ENCODE measurements at regions of chr7 and their contacts with region 1.

Region 1: DNA sequence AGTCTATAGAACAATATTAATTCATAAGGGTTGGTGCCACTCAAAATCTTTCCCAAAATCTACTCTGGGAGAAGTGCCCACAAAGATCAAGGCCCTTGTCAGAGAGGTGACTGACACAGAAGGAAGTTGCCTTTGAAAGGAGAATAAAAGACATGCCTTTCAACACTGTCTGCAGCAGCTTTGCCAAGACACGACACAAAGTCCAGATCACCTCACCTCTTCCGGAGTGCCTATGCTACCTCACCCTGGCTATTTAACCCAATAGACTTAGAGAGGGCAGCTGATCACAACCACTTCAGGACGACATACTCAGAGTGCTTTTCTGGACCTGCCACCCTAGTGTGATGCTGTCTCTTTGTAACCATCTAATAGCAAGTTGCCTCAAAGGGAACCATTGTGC is 49.0 kb upstream of the YAE1 start:
- DNase-seq: no peak
- H3K4me3 ChIP-seq: no peak overlapping the region
- H3K27ac ChIP-seq: no peak overlapping the region
- H3K4me1 ChIP-seq: no peaks in the 10 kb centered on the region
- H3K27me3 ChIP-seq: peaks cover 2% of the 10 kb centered on the region
- CTCF ChIP-seq: no peak

Region 2: GRCh38 chr7:38398725-38399321 is 1118.4 kb before region 1 on chr7:
- CTCF ChIA-PET with region 1: no interaction called
- dilution Hi-C with region 1: no loop called
- in situ Hi-C with region 1: no loop called
- intact Hi-C with region 1: loop called (anchors 1 kb)
- DNase-seq: peak; percentile 5
- H3K4me3 ChIP-seq: no peak overlapping the region
- H3K27ac ChIP-seq: no peak overlapping the region
- H3K4me1 ChIP-seq: no peaks in the 10 kb centered on the region
- H3K27me3 ChIP-seq: no peaks in the 10 kb centered on the region
- CTCF ChIP-seq: peak; percentile 76 to 86

Region 3: GRCh38 chr7:38796626-38797501 is 720.4 kb before region 1 on chr7:
- CTCF ChIA-PET with region 1: no interaction called
- dilution Hi-C with region 1: no loop called
- in situ Hi-C with region 1: no loop called
- intact Hi-C with region 1: loop called (anchors 1 kb)
- DNase-seq: peak; percentile 39
- H3K4me3 ChIP-seq: no peak overlapping the region
- H3K27ac ChIP-seq: no peak overlapping the region
- H3K4me1 ChIP-seq: peaks cover 12% of the 10 kb centered on the region
- H3K27me3 ChIP-seq: no peaks in the 10 kb centered on the region
- CTCF ChIP-seq: peak; percentile 68 to 71

Region 4: GRCh38 chr7:38932509-38933168 is 584.6 kb before region 1 on chr7:
- CTCF ChIA-PET with region 1: no interaction called
- dilution Hi-C with region 1: no loop called
- in situ Hi-C with region 1: no loop called
- intact Hi-C with region 1: loop called (anchors 1 kb)
- DNase-seq: peak; percentile 16
- H3K4me3 ChIP-seq: no peak overlapping the region
- H3K27ac ChIP-seq: no peak overlapping the region
- H3K4me1 ChIP-seq: no peaks in the 10 kb centered on the region
- H3K27me3 ChIP-seq: no peaks in the 10 kb centered on the region
- CTCF ChIP-seq: peak; percentile 96 to 97

Region 5: DNA sequence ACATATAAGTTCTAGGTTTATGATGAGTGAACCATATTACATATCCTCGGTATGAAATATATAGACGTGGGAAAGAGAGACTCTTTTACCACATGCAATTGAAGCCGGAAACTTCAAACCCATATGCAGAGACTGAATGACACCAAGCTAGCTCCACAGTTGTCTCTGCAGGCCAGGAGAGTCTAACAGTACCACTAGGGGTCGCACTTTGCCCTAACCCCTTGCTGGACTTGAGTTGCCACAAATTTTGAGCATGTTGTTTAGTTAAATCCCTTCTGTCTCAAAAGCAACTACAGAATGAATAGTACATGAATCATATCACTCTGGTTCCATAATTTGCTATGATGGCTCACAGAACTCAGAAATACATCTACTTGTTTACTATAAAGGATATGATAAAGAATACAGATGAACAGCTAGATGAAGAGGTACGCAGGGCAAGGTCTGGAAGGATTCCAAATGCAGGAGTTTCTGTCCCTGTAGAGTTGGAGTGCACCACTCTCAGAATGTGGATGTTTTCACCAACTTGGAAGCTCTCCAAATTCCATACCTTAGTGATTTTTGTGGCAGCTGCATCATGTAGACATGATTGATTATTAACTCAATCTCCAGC is 63.4 kb before region 1 on chr7:
- CTCF ChIA-PET with region 1: no interaction called
- dilution Hi-C with region 1: no loop called
- in situ Hi-C with region 1: no loop called
- intact Hi-C with region 1: loop called (anchors 1 kb)
- DNase-seq: peak; percentile 56
- H3K4me3 ChIP-seq: no peak overlapping the region
- H3K27ac ChIP-seq: no peak overlapping the region
- H3K4me1 ChIP-seq: no peaks in the 10 kb centered on the region
- H3K27me3 ChIP-seq: peaks cover 6% of the 10 kb centered on the region
- CTCF ChIP-seq: peak; percentile 88 to 92

Measured in mammary epithelial cell (primary cell).